Activated naive CD4-positive, alpha-beta T cell treated with anti-CD3 and anti-CD28 coated beads for 36 hours (primary cell): ENCODE measurements at regions of chr14 and their contacts with region 1.

Region 1: GRCh38 chr14:91114079-91115065 is 499 bp downstream of the DGLUCY start:
- DNase-seq: peak; percentile 82
- H3K4me3 Mint-ChIP-seq: peak overlapping the region; percentile 94
- H3K27ac Mint-ChIP-seq: peak overlapping the region; percentile 95
- H3K4me1 Mint-ChIP-seq: peaks cover 60% of the 10 kb centered on the region
- H3K27me3 Mint-ChIP-seq: no peaks in the 10 kb centered on the region

Region 2: DNA sequence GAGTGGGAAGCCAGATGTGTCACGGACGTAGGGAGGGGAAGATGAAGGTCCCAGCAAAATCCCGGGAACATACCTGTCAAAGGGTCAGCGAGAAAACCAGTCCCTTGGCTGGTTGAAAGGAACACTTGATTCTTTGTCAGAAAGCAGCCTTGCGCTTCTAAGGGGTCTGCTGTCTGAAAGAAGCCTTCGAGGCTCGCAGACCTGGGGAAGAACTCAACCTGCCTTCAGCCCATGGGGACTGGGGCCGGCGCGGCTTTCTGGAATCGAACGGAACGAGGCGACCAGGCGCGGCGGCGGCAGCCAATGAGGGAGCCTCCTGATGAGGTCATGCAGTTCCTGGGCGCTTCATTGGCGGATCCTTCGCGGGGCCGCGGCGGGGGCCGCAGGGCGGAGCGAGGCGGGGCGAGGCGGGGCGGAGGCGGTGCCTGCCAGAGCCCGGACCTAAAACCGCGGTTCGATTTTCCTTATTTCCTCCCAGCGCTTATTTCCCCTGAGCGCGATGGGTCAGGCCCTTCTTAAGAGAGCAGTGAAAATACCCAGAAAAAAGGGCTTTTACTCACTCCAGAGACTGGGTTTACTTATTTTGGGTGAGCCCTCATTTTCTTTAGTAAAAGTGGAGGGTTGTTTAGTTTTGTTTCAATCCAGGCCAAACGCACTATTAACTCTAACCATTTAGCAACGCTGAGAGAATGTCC is 286.3 kb before region 1 on chr14:
- CTCF ChIA-PET with region 1: no interaction called
- intact Hi-C with region 1: loop called (anchors 2 kb)
- DNase-seq: peak; percentile 96
- H3K4me3 Mint-ChIP-seq: peak overlapping the region; percentile 76
- H3K27ac Mint-ChIP-seq: peak overlapping the region; percentile 66
- H3K4me1 Mint-ChIP-seq: peaks cover 17% of the 10 kb centered on the region
- H3K27me3 Mint-ChIP-seq: no peaks in the 10 kb centered on the region

Region 3: GRCh38 chr14:91035855-91036254 is 78.5 kb before region 1 on chr14:
- CTCF ChIA-PET with region 1: interaction called, 6 read pairs
- intact Hi-C with region 1: loop called (anchors 1 kb)
- DNase-seq: peak; percentile 34
- H3K4me3 Mint-ChIP-seq: no peak overlapping the region
- H3K27ac Mint-ChIP-seq: peak overlapping the region; percentile 68
- H3K4me1 Mint-ChIP-seq: peaks cover 66% of the 10 kb centered on the region
- H3K27me3 Mint-ChIP-seq: no peaks in the 10 kb centered on the region

Region 4: DNA sequence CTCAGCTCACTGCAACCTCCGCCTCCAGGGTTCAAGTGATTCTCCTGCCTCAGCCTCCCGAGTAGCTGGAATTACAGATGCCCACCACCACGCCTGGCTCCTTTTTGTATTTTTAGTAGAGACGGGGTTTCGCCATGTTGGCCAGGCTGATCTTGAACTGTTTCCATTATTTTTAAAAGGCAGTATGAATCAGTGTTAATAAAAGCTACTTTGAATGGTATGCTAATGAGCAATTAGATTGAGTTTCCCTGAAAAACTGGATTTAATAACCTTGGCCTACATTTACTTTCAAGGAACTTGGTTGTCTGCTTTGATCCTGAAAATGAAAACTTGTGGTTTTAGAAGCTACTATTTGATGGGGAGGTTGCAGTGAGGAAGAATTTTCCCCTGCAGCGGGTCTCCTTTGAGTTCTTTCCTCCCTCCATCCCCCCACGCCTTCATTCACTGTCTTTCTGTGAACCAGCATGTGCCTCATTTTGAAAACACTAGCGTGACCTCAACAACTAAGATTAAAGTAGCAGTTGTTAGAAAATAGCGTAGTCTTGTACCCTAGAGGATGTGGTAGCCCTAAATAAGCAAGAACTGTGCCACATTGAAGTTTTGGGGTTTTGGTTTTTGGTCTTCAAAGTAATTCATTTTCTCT is 36.2 kb before region 1 on chr14:
- CTCF ChIA-PET with region 1: interaction called, 5 read pairs
- intact Hi-C with region 1: loop called (anchors 1 kb)
- DNase-seq: peak; percentile 77
- H3K4me3 Mint-ChIP-seq: no peak overlapping the region
- H3K27ac Mint-ChIP-seq: peak overlapping the region; percentile 39
- H3K4me1 Mint-ChIP-seq: peaks cover 29% of the 10 kb centered on the region
- H3K27me3 Mint-ChIP-seq: peaks cover 3% of the 10 kb centered on the region

Region 5: DNA sequence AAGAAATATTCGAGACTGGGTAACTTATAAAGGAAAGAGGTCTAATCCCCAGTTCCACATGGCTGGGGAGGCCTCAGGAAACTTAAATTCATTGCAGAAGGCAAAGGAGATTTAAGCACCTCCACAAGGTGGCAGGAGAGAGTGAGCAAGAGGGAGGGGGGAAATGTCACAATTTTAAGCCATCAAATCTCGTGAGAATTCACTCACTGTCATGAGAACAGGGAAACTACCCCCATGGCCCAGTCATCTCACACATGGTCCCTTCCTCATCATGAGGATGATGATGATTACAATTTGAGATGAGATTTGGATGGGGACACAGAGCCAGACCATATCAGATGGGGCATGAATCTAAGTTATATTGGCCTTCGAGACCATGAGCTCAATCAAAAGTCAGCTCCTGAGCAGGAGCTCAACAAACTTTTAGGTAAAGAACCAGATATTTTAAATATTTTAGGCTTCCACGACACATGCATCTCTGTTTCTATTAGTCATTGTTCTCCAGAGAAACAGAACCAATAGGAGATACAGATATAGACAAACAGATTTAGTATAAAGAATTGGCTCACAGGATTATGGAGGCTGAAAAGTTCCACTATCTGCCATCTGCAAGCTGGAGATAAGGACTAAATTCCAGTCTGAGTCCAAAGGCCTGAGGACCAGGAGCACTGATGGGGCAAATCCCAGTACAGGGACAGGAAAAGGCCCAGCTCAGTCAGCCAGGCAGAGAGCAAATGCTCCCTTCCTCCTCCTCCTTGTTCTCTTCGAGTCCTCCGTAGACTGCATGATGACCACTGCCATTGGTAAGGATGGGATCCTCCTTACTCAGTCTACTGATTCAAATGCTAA is 24.4 kb after region 1 on chr14:
- CTCF ChIA-PET with region 1: interaction called, 4 read pairs
- intact Hi-C with region 1: loop called (anchors 1 kb)
- DNase-seq: peak; percentile 80
- H3K4me3 Mint-ChIP-seq: no peak overlapping the region
- H3K27ac Mint-ChIP-seq: peak overlapping the region; percentile 59
- H3K4me1 Mint-ChIP-seq: peaks cover 43% of the 10 kb centered on the region
- H3K27me3 Mint-ChIP-seq: no peaks in the 10 kb centered on the region